ENCODE measurements at regions of chr1 and their contacts with region 1.

Region 1: DNA sequence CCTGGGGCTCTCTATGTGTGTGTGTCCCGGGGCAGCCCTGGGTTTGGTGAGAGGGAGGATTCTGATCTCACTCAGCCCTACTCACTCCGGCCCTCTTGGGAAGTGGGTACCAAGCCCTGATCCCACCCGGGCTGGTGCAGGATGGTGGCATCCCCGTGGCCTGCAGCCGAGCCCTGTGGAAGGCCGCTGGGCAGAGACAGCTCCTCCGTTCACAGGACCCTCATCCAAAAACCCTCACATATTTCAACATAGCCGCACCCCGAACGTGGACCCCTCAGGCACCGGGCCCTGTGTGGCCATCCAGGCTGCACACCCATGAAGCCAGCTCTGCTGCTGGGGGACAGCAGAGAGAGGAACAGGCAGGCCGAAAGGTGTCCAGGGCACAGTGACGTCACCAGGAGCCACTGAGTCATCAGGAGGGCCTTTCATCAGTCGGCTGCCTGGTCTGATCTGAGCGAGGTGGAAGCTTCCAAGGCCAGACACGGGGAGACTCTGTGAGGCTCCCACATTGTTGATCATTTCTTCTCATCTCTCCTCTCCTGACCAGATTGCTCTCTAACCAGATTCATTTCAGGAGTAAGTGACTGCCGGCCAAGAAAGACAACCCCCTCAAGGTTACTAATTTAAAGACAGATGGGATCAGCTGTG is 16.2 kb upstream of the GPR157 start:
- DNase-seq: peak; percentile 59 to 76
- ATAC-seq: peak; percentile 79 to 95
- H3K4me3 ChIP-seq: no peak overlapping the region
- H3K27ac ChIP-seq: peak overlapping the region; percentile 46 to 80; a peak in 5 of 6 replicates
- H3K4me1 ChIP-seq: peaks cover 24% of the 10 kb centered on the region
- CTCF ChIP-seq: no peak
- EP300 ChIP-seq: no peak
- POLR2A ChIP-seq: no peak
- RAD21 ChIP-seq: no peak

Region 2: GRCh38 chr1:9128520-9129265 is 16.5 kb before region 1 on chr1 and contains the start of gene GPR157:
- CTCF ChIA-PET with region 1: interaction called, 40 read pairs
- POLR2A ChIA-PET with region 1: interaction called, 8 read pairs
- DNase-seq: peak; percentile 85 to 86
- ATAC-seq: peak; percentile 80 to 86
- H3K4me3 ChIP-seq: peak within 1 kb of the TSS; percentile 69
- H3K27ac ChIP-seq: peak within 1 kb of the TSS; percentile 83 to 85
- H3K4me1 ChIP-seq: peaks cover 14% of the 10 kb centered on the region
- CTCF ChIP-seq: no peak
- EP300 ChIP-seq: no peak
- POLR2A ChIP-seq: peak; percentile 81
- RAD21 ChIP-seq: no peak
- polyA plus RNA-seq, gene GPR157: 3.6 and 3.7 TPM in 2 replicates

Region 3: DNA sequence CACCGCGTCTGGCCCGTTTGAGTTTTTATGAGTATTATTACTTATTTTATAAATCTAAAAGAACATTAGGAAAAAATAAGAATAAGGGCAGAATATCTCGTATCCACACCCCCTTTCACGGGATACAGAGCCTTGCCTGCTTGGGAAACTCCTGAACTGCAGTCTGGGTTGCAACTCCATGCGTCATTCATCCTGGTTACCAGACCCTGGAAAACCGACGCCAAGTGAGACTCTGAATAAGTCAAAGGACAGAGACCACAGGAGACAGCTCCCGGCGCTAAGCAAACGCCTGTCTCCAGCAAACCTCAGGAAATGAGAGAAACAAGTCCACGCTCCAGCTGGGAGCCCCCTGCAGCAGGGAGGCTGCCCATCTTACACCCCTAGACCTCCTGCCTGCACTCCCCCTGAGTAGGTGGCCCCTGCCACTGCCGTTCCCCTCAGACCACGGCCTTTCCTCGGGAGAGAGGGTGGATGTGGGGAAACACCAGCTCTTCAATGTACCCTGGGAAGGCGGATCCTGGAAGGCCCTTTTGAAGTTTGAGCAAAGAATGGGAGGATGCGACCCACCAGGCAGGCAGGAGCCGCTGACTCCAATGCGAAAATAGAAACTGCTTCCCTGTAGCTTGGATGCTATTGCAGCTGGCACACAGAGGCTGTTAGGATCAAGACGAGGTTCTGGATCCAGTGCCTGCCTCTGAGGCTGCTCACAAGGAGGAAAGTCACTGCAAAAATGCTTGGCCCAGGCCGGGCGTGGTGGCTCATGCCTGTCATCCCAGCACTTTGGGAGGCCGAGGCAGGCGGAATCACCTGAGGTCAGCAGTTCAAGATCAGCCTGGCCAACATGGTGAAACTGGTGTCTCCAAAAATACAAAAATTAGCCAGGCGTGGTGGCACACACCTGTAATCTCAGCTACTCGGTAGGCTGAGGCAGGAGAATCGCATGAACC is 21.4 kb after region 1 on chr1:
- CTCF ChIA-PET with region 1: interaction called, 16 read pairs
- POLR2A ChIA-PET with region 1: no interaction called
- DNase-seq: no peak
- ATAC-seq: no peak
- H3K4me3 ChIP-seq: no peak overlapping the region
- H3K27ac ChIP-seq: peak overlapping the region in 1 of 2 experiments; percentile 97; a peak in 3 of 6 replicates
- H3K4me1 ChIP-seq: peaks cover 46% of the 10 kb centered on the region
- CTCF ChIP-seq: no peak
- EP300 ChIP-seq: no peak
- POLR2A ChIP-seq: no peak
- RAD21 ChIP-seq: no peak

Region 4: DNA sequence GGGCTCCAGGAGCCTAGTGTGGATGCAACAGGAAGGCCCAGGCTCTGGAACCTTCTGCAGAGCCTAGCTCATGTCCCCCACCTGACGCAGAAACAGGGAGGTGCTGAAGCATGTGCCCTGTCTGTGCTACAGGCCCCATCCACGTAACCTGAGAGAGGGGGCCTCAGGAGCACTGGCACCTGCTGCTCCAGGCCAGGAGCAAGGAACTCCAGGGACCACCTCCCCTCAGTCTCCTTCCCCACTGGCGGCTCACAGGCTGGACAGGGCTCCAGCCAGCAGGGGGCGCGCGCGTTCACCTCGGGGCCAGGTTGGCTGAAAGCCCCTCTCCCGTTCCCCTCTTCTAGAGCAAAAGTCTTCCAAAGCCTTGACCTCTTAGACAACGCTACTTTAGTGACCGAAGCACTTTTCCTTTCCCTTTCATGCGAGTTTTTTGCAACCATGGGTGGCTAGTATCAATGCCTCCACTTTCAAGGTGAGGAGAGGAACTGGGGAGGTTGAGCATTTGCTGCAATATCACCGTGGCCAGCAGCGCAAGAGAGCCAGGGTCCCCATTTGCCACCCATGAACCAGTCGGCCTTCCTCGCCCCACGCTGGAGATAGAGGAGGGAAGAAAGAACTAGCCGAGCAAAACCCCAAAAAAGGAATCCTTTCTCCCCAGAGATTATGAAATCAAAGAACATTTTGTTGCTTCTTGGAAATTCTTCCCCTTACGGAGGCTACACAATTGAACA is 36.2 kb after region 1 on chr1:
- CTCF ChIA-PET with region 1: interaction called, 24 read pairs
- POLR2A ChIA-PET with region 1: no interaction called
- DNase-seq: peak; percentile 60 to 68
- ATAC-seq: peak; percentile 80 to 83
- H3K4me3 ChIP-seq: peak overlapping the region; percentile 68
- H3K27ac ChIP-seq: peak overlapping the region; percentile 93 to 100
- H3K4me1 ChIP-seq: peaks cover 42% of the 10 kb centered on the region
- CTCF ChIP-seq: peak; percentile 85
- EP300 ChIP-seq: no peak
- POLR2A ChIP-seq: no peak
- RAD21 ChIP-seq: peak; percentile 40 to 48; a peak in 4 of 5 replicates

Region 5: GRCh38 chr1:9196129-9197040 is 51.2 kb after region 1 on chr1:
- CTCF ChIA-PET with region 1: interaction called, 24 read pairs
- POLR2A ChIA-PET with region 1: interaction called, 4 read pairs
- DNase-seq: peak; percentile 29 to 48
- ATAC-seq: peak; percentile 72 to 84; a peak in 5 of 6 replicates
- H3K4me3 ChIP-seq: no peak overlapping the region
- H3K27ac ChIP-seq: peak overlapping the region; percentile 50 to 81; a peak in 5 of 6 replicates
- H3K4me1 ChIP-seq: peaks cover 29% of the 10 kb centered on the region
- CTCF ChIP-seq: peak; percentile 72
- EP300 ChIP-seq: no peak
- POLR2A ChIP-seq: no peak
- RAD21 ChIP-seq: peak; percentile 89 to 92

Measured in A549 (cell line).